CD14-positive monocyte (primary cell): ENCODE measurements at regions of chr10 and their contacts with region 1.

Region 1: GRCh38 chr10:23314835-23315239 is 29.8 kb downstream of the C10orf67 start:
- DNase-seq: peak; percentile 52 to 79 (median 74)
- H3K4me3 ChIP-seq: no peak overlapping the region
- H3K4me3 Mint-ChIP-seq: no peak overlapping the region
- H3K27ac ChIP-seq: no peak overlapping the region
- H3K27ac Mint-ChIP-seq: no peak overlapping the region
- H3K4me1 ChIP-seq: no peaks in the 10 kb centered on the region
- H3K4me1 Mint-ChIP-seq: no peaks in the 10 kb centered on the region
- H3K27me3 ChIP-seq: no peaks in the 10 kb centered on the region
- H3K27me3 Mint-ChIP-seq: peaks cover 10 to 13% (median 11%) of the 10 kb centered on the region in 3 donors
- CTCF ChIP-seq: peak; percentile 77

Region 2: GRCh38 chr10:23110722-23111516 is 203.9 kb before region 1 on chr10:
- intact Hi-C with region 1: no loop called
- DNase-seq: no peak
- H3K4me3 ChIP-seq: no peak overlapping the region
- H3K4me3 Mint-ChIP-seq: no peak overlapping the region
- H3K27ac ChIP-seq: no peak overlapping the region
- H3K27ac Mint-ChIP-seq: peak overlapping the region in 1 of 7 donors; percentile 43
- H3K4me1 ChIP-seq: peaks cover 7 to 9% of the 10 kb centered on the region in 2 donors
- H3K4me1 Mint-ChIP-seq: peaks cover 15% of the 10 kb centered on the region
- H3K27me3 ChIP-seq: no peaks in the 10 kb centered on the region
- H3K27me3 Mint-ChIP-seq: peaks cover 0 to 3% (median 0%) of the 10 kb centered on the region in 3 donors
- CTCF ChIP-seq: no peak

Region 3: GRCh38 chr10:23499372-23500132 is 184.7 kb after region 1 on chr10:
- intact Hi-C with region 1: no loop called
- DNase-seq: no peak
- H3K4me3 ChIP-seq: no peak overlapping the region
- H3K4me3 Mint-ChIP-seq: no peak overlapping the region
- H3K27ac ChIP-seq: no peak overlapping the region
- H3K27ac Mint-ChIP-seq: no peak overlapping the region
- H3K4me1 ChIP-seq: no peaks in the 10 kb centered on the region
- H3K4me1 Mint-ChIP-seq: no peaks in the 10 kb centered on the region
- H3K27me3 ChIP-seq: no peaks in the 10 kb centered on the region
- H3K27me3 Mint-ChIP-seq: peaks cover 3 to 10% (median 7%) of the 10 kb centered on the region in 3 donors
- CTCF ChIP-seq: no peak

Region 4: GRCh38 chr10:23525406-23525805 is 210.6 kb after region 1 on chr10:
- intact Hi-C with region 1: loop called (anchors 5 to 10 kb)
- DNase-seq: no peak
- H3K4me3 ChIP-seq: no peak overlapping the region
- H3K4me3 Mint-ChIP-seq: no peak overlapping the region
- H3K27ac ChIP-seq: no peak overlapping the region
- H3K27ac Mint-ChIP-seq: peak overlapping the region in 2 of 7 donors; percentile 19 to 60
- H3K4me1 ChIP-seq: peaks cover 11 to 14% of the 10 kb centered on the region in 2 donors
- H3K4me1 Mint-ChIP-seq: peaks cover 19% of the 10 kb centered on the region
- H3K27me3 ChIP-seq: no peaks in the 10 kb centered on the region
- H3K27me3 Mint-ChIP-seq: no peaks in the 10 kb centered on the region
- CTCF ChIP-seq: no peak

Region 5: DNA sequence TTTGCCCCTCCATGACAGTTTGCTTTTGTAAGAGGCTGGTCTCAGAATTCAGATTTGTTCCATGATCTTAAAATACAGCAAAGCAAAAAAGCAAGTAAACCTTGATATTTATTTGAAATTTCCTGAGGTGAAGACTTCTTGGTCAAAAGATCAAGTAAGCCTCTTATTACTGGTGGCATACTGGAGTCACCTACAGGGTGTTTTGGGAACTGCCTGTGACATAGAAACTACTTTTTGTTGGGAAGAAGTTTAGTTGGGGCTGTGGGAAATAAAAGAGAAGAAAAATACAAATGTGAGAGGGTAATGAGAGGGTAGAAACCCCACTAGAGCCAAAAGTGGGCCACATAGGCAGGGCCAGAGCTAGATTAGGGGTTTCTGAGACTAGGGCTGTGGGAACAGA is 341.9 kb after region 1 on chr10:
- intact Hi-C with region 1: loop called in 1 of 2 experiments (anchors 5 kb)
- DNase-seq: peak; percentile 29 to 60 (median 56)
- H3K4me3 ChIP-seq: no peak overlapping the region
- H3K4me3 Mint-ChIP-seq: no peak overlapping the region
- H3K27ac ChIP-seq: no peak overlapping the region
- H3K27ac Mint-ChIP-seq: no peak overlapping the region
- H3K4me1 ChIP-seq: no peaks in the 10 kb centered on the region
- H3K4me1 Mint-ChIP-seq: peaks cover 5% of the 10 kb centered on the region
- H3K27me3 ChIP-seq: peaks cover 0 to 2% of the 10 kb centered on the region in 2 donors
- H3K27me3 Mint-ChIP-seq: peaks cover 4 to 21% (median 14%) of the 10 kb centered on the region in 3 donors
- CTCF ChIP-seq: peak; percentile 83

Region 6: DNA sequence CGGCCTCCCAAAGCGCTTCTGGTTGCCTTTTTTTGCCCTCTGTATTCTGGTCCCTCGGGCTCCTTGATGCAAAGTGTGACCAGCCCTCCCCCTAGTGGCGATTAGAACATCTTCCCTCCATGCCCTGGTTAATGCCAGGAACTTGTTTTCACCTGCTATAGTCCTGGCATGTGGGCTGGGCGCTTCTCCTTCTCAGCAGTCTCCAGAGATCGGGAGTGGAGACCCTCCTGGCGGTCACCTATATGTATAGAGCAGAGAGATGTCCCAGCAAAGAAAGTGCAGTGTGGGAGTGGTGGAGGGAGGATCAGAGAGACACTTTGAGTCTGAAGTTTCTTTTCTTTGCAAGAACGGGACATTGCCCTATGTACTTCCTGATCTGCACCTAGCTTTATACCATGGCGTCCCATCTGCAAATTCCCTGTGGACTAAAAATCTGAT is 388.2 kb after region 1 on chr10:
- intact Hi-C with region 1: loop called (anchors 2 to 5 kb)
- DNase-seq: peak; percentile 47 to 68 (median 54)
- H3K4me3 ChIP-seq: no peak overlapping the region
- H3K4me3 Mint-ChIP-seq: peak overlapping the region in 1 of 2 donors; percentile 39
- H3K27ac ChIP-seq: no peak overlapping the region
- H3K27ac Mint-ChIP-seq: peak overlapping the region in 1 of 7 donors; percentile 46
- H3K4me1 ChIP-seq: no peaks in the 10 kb centered on the region
- H3K4me1 Mint-ChIP-seq: peaks cover 6% of the 10 kb centered on the region
- H3K27me3 ChIP-seq: peaks cover 3 to 8% of the 10 kb centered on the region in 2 donors
- H3K27me3 Mint-ChIP-seq: peaks cover 2 to 18% (median 9%) of the 10 kb centered on the region in 3 donors
- CTCF ChIP-seq: peak; percentile 78

Region 7: GRCh38 chr10:24202181-24202570 is 887.3 kb after region 1 on chr10:
- intact Hi-C with region 1: loop called (anchors 5 to 10 kb)
- DNase-seq: no peak
- H3K4me3 ChIP-seq: no peak overlapping the region
- H3K4me3 Mint-ChIP-seq: no peak overlapping the region
- H3K27ac ChIP-seq: no peak overlapping the region
- H3K27ac Mint-ChIP-seq: peak overlapping the region in 1 of 7 donors; percentile 16
- H3K4me1 ChIP-seq: no peaks in the 10 kb centered on the region
- H3K4me1 Mint-ChIP-seq: no peaks in the 10 kb centered on the region
- H3K27me3 ChIP-seq: no peaks in the 10 kb centered on the region
- H3K27me3 Mint-ChIP-seq: peaks cover 4 to 11% (median 8%) of the 10 kb centered on the region in 3 donors
- CTCF ChIP-seq: no peak